Endothelial cell of umbilical vein (primary cell): ENCODE measurements at regions of chr17 and their contacts with region 1.

Region 1: GRCh38 chr17:75845049-75845860 is 1.1 kb upstream of the UNC13D start:
- DNase-seq: peak; percentile 70
- H3K4me3 ChIP-seq: no peak overlapping the region
- H3K27ac ChIP-seq: peak overlapping the region; percentile 31
- H3K4me1 ChIP-seq: peaks cover 39% of the 10 kb centered on the region
- H3K27me3 ChIP-seq: no peaks in the 10 kb centered on the region
- CTCF ChIP-seq: peak; percentile 79 to 87
- POLR2A ChIP-seq: no peak

Region 2: DNA sequence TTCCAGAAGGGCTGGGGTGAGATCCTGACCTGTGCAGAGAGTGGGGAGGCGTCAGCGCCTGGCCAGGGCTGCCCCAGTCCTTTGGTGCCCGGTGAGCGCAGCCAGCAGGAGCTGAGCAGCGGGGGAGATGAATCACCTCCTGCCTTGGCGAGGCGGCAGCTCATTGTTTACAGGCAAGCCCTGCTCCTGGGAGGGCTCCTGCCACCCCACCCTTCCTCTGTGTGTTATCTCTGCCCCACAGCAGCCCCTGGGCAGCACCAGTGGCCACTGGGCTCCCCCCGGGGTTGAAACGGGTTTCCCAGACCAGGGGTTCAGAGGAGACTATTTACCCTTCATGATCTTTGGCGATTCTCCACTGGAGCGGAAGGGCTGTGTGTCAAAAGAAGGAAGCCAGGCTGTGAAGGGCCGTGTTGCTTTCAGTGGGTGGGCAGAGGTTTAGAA is 138.1 kb before region 1 on chr17:
- CTCF ChIA-PET with region 1: no interaction called
- POLR2A ChIA-PET with region 1: no interaction called
- dilution Hi-C with region 1: no loop called
- intact Hi-C with region 1: no loop called
- DNase-seq: peak; percentile 97
- H3K4me3 ChIP-seq: no peak overlapping the region
- H3K27ac ChIP-seq: peak overlapping the region; percentile 70
- H3K4me1 ChIP-seq: peaks cover 32% of the 10 kb centered on the region
- H3K27me3 ChIP-seq: no peaks in the 10 kb centered on the region
- CTCF ChIP-seq: no peak
- POLR2A ChIP-seq: peak; percentile 72

Region 3: DNA sequence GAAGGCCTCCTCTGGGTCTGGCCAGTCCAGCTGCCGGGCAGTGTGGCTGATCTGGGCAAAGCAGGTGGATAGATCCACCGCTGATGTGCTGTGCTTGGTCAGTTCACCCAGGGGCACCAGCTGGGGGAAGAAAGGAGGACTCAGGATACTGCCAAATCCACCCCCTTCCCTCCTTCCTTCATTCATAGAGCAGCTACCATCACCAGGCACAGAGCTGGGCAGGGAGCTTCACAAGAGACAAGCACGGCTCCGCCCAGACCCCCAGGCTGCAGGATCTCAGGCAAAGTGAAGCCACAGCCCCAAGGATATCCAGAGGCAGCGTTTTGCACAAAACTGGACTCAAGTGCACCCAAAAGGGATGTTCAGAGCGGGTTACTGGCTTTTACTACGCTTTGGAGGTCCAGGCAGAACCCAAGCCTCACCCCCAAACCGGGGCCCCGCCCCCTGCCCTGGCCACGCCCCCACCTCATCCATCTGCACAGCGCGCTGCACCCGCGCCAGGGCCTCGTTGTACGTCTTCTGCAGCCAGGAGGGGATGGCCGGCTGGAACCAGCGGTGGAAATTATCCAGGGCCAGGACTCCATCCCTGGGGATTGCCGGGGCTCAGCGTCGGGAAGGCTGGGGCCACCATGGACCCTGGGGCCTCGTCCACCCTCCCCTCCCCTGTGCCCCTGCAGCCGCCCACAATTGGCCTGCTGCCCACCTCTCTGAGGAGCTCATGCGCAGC is 10.1 kb before region 1 on chr17:
- CTCF ChIA-PET with region 1: interaction called, 10 read pairs
- POLR2A ChIA-PET with region 1: no interaction called
- dilution Hi-C with region 1: no loop called
- intact Hi-C with region 1: no loop called
- DNase-seq: no peak
- H3K4me3 ChIP-seq: no peak overlapping the region
- H3K27ac ChIP-seq: no peak overlapping the region
- H3K4me1 ChIP-seq: no peaks in the 10 kb centered on the region
- H3K27me3 ChIP-seq: no peaks in the 10 kb centered on the region
- CTCF ChIP-seq: no peak
- POLR2A ChIP-seq: no peak

Region 4: GRCh38 chr17:75855310-75856081 is 10.2 kb after region 1 on chr17 and contains the start of gene WBP2:
- CTCF ChIA-PET with region 1: interaction called, 53 read pairs
- POLR2A ChIA-PET with region 1: no interaction called
- dilution Hi-C with region 1: no loop called
- intact Hi-C with region 1: loop called (anchors 1 kb)
- DNase-seq: peak; percentile 100
- H3K4me3 ChIP-seq: peak within 1 kb of the TSS; percentile 19 to 76 (median 75)
- H3K27ac ChIP-seq: peak within 1 kb of the TSS; percentile 89
- H3K4me1 ChIP-seq: peaks cover 39% of the 10 kb centered on the region
- H3K27me3 ChIP-seq: no peaks in the 10 kb centered on the region
- CTCF ChIP-seq: peak; percentile 42 to 54
- POLR2A ChIP-seq: peak; percentile 81
- total RNA-seq, gene WBP2: 120 and 126 TPM in 2 replicates

Region 5: GRCh38 chr17:75861927-75862317 is 16.7 kb after region 1 on chr17:
- CTCF ChIA-PET with region 1: interaction called, 53 read pairs
- POLR2A ChIA-PET with region 1: no interaction called
- dilution Hi-C with region 1: no loop called
- intact Hi-C with region 1: no loop called
- DNase-seq: no peak
- H3K4me3 ChIP-seq: no peak overlapping the region
- H3K27ac ChIP-seq: no peak overlapping the region
- H3K4me1 ChIP-seq: peaks cover 10% of the 10 kb centered on the region
- H3K27me3 ChIP-seq: no peaks in the 10 kb centered on the region
- CTCF ChIP-seq: no peak
- POLR2A ChIP-seq: no peak

Region 6: DNA sequence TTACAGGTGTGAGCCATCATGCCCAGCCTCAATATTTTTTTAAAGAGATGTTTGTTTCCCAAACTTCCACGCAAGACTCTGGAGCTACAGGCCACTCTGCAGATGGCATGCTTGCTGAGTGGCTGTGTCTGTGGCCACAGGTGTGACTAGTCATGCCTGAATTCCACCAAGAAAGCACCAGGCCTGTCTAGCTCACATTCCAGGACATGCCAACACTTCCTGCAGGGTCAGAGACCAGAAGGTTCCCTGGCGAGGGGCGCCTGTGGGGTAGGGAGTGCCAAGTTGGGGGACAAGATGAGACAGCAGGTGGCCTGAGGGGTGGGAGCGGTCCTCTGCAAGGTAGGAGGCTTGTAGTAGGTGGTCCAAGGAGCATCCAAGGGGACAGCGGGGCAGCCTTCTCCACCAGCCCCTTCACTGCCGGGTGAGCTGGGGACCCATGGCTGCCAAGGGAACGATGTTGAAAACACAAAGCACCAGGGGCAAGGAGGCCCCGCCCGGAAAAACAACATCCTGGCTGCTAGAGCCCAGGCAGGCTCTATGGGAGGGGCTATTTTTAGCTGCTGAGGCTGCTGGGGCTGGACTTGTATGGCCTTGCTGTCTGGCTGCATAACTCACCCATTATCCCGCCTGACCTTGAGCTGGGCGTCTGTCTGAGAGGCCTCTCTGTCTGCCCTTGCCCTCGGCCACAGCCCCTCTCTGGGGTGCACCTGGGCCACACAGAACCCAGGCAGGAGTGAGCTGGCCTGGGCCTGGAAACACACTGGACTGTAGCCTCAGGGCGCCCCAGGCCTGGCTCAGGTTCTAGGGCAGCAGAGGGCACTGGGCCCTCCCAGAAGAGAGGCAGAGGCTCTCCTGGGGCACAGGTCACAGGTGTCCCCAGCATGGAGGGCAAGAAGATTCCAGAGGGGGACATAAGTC is 27.4 kb after region 1 on chr17:
- CTCF ChIA-PET with region 1: interaction called, 49 read pairs
- POLR2A ChIA-PET with region 1: no interaction called
- dilution Hi-C with region 1: no loop called
- intact Hi-C with region 1: loop called (anchors 1 kb)
- DNase-seq: peak; percentile 95
- H3K4me3 ChIP-seq: no peak overlapping the region
- H3K27ac ChIP-seq: peak overlapping the region; percentile 95
- H3K4me1 ChIP-seq: peaks cover 43% of the 10 kb centered on the region
- H3K27me3 ChIP-seq: no peaks in the 10 kb centered on the region
- CTCF ChIP-seq: no peak
- POLR2A ChIP-seq: peak; percentile 63

Region 7: DNA sequence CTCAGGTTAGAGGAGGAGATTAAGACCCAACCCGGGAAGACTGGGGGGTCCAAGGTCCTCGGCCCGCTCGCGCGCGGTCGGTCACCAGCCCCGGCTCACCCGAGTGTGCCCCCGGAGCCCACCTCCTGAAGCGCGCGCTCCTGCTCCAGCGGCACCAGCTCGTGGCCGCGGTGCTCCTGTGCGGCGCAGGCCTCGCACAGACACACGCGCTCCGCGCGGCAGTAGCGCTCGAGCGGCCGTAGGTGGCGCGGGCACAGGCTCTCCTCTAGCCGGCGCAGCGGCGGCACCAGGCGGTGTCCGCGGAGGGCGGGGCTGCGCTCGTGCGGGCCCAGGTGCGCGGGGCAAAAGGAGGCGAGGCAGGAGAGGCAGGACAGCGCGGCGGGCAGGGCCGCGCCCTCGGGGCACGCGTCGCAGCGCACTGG is 32.5 kb after region 1 on chr17:
- CTCF ChIA-PET with region 1: interaction called, 49 read pairs
- POLR2A ChIA-PET with region 1: no interaction called
- dilution Hi-C with region 1: no loop called
- intact Hi-C with region 1: loop called (anchors 1 kb)
- DNase-seq: peak; percentile 74
- H3K4me3 ChIP-seq: peak overlapping the region; percentile 1 to 67 (median 66)
- H3K27ac ChIP-seq: peak overlapping the region; percentile 70
- H3K4me1 ChIP-seq: peaks cover 34% of the 10 kb centered on the region
- H3K27me3 ChIP-seq: no peaks in the 10 kb centered on the region
- CTCF ChIP-seq: peak; percentile 33 to 66
- POLR2A ChIP-seq: no peak